GM10248 (cell line): ENCODE measurements at regions of chr18 and their contacts with region 1.

Region 1: DNA sequence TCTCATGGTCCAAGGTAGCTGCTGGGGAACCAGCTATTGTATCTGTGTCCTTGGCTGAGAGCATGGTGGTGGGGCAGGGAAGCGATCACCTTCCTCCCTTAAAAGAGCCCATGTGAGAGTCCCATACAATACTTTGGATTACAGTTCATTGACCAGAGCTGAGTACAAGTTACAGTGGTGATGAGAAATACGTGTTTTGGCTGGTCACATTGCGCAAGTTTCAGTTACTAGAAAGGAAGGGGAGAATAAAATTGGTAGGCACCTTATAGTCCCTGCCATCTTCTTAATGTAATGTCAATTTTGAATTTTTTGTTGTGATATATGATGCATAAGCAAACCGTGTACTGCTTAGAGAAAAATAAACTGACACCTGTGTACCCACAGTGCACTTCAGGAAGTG is 67.7 kb downstream of the ZNF407 start:
- DNase-seq: no peak
- CTCF ChIP-seq: no peak

Region 2: GRCh38 chr18:74251297-74252038 is 413.9 kb before region 1 on chr18:
- CTCF ChIA-PET with region 1: no interaction called
- POLR2A ChIA-PET with region 1: no interaction called
- DNase-seq: no peak
- CTCF ChIP-seq: no peak

Region 3: DNA sequence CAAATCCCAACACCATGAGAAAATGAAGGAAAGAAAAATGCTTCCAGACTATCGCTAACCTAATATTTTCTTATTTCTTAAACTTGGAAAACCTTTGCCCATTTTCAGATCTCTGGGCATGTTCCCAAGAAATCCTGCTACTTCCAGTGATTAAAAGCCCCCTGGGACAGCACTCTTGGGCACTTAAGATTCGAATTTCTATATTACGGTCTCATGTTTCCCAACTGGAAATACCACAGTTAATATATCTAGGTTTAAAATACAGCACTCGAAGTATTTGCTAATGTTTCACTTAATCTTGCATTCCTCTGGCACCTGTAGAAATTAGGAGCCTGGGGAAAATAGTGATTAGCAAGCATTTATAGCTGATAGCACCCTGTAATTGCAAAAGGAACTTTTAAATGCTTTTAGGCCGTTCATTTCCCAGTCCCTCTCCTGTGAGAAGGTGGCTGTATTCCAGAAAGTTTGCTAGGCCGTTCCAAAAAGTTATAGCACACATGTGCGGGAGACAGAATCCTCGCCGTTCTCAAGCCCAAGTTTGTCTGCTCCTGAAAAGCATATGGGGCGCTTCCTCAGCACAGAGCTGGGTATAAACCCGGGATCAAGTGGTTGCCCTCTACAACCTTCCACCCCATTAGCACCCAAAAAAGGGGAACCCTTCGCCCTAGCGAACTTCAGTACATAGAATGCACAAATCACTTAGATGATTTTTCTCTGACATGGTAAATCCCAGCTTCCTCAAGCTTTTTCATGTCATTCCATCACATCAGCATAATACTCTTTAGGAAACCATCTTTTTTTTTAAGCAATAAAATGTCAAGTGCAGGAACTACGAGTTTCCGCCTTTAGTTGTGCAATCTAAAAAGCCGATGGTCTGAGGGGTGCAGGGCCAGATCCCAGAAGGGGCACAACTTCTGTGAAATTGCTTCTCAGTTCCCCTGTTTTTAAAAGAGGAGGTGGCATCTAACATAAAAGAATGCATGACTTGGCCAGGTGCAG is 268.9 kb before region 1 on chr18:
- CTCF ChIA-PET with region 1: no interaction called
- POLR2A ChIA-PET with region 1: no interaction called
- DNase-seq: no peak
- CTCF ChIP-seq: no peak

Region 4: GRCh38 chr18:74579496-74580065 is 85.8 kb before region 1 on chr18:
- CTCF ChIA-PET with region 1: no interaction called
- POLR2A ChIA-PET with region 1: no interaction called
- DNase-seq: no peak
- CTCF ChIP-seq: no peak

Region 5: GRCh38 chr18:74652392-74652988 is 12.9 kb before region 1 on chr18:
- CTCF ChIA-PET with region 1: interaction called, 12 read pairs
- POLR2A ChIA-PET with region 1: no interaction called
- DNase-seq: no peak
- CTCF ChIP-seq: peak; percentile 42